ENCODE measurements at regions of chr9 and their contacts with region 1.

Region 1: GRCh38 chr9:99140685-99141314 is 35.9 kb downstream of the TGFBR1 start:
- DNase-seq: peak; percentile 78
- H3K4me3 ChIP-seq: no peak overlapping the region
- H3K27ac ChIP-seq: peak overlapping the region; percentile 9 to 75 (median 64)
- H3K4me1 ChIP-seq: peaks cover 0 to 56% (median 36%) of the 10 kb centered on the region in 4 donors
- H3K27me3 ChIP-seq: no peaks in the 10 kb centered on the region
- CTCF ChIP-seq: peak; percentile 87 to 97 (median 90)
- EP300 ChIP-seq: no peak
- POLR2A ChIP-seq: no peak

Region 2: GRCh38 chr9:98801969-98802371 is 338.8 kb before region 1 on chr9:
- intact Hi-C with region 1: loop called (anchors 5 kb)
- DNase-seq: no peak
- H3K4me3 ChIP-seq: no peak overlapping the region
- H3K27ac ChIP-seq: peak overlapping the region in 2 of 4 donors; percentile 17 to 34
- H3K4me1 ChIP-seq: peaks cover 0 to 38% (median 24%) of the 10 kb centered on the region in 4 donors
- H3K27me3 ChIP-seq: no peaks in the 10 kb centered on the region
- CTCF ChIP-seq: no peak
- EP300 ChIP-seq: no peak
- POLR2A ChIP-seq: no peak

Region 3: DNA sequence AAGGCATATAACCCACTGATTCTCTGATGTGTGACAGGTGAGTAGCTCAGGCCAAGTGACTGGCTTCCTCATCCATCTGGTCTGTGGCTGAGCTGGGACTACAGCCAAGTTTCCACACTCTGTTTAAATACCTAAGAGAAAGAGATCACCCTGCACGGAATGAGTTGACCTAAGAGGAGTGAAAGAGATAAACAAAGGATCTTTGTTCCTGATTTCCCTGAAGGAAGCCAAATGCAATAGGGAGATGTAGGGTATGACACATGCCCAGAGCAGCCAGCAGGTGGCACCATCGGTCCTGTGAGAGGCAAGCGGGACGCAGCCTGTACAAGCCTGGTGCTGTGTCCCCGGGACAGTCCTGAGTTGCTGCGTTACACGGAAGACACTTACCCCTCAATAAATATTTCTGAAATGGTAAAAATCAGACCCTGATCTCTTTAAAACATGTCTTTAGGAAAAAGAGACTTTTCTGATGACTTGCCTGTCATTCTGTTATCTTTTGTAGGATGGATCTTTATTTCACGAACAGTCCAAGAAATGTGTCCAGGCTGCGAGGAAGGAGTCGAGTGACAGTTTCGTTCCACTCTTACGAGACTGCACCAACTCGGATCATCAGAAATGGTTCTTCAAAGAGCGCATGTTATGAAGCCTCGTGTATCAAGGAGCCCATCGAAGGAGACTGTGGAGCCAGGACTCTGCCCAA is 292.2 kb before region 1 on chr9:
- intact Hi-C with region 1: loop called (anchors 2 kb)
- DNase-seq: peak; percentile 97
- H3K4me3 ChIP-seq: peak overlapping the region; percentile 13 to 27 (median 24)
- H3K27ac ChIP-seq: peak overlapping the region; percentile 72 to 84 (median 79)
- H3K4me1 ChIP-seq: peaks cover 0 to 47% (median 37%) of the 10 kb centered on the region in 4 donors
- H3K27me3 ChIP-seq: no peaks in the 10 kb centered on the region
- CTCF ChIP-seq: peak; percentile 87 to 94 (median 90)
- EP300 ChIP-seq: peak in 1 of 4 donors; percentile 1
- POLR2A ChIP-seq: no peak

Region 4: DNA sequence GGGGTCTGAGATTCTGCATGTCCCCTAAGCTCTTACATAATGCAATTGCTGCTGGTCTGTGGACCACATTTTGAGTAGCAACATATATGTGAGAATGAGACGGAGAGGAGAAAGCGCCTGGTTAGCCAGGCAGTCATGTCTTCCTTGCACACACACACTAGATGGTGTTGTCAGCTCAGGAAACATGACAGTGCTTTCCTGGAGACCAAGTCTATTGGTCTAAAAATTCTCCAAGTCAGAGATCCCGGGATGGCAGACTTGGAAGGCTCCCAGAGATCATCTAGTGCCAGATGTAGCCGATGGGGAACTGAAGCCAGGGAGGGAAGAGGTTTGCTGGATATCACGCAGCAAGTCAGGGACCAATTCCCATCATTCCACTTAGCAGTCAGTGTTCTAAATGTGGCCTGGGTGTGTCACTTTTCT is 279.9 kb before region 1 on chr9:
- intact Hi-C with region 1: loop called (anchors 2 kb)
- DNase-seq: peak; percentile 92
- H3K4me3 ChIP-seq: no peak overlapping the region
- H3K27ac ChIP-seq: peak overlapping the region; percentile 12 to 72 (median 66)
- H3K4me1 ChIP-seq: peaks cover 0 to 29% (median 12%) of the 10 kb centered on the region in 4 donors
- H3K27me3 ChIP-seq: no peaks in the 10 kb centered on the region
- CTCF ChIP-seq: peak; percentile 54 to 63 (median 60)
- EP300 ChIP-seq: peak in 2 of 4 donors; percentile 29 to 54
- POLR2A ChIP-seq: no peak

Region 5: DNA sequence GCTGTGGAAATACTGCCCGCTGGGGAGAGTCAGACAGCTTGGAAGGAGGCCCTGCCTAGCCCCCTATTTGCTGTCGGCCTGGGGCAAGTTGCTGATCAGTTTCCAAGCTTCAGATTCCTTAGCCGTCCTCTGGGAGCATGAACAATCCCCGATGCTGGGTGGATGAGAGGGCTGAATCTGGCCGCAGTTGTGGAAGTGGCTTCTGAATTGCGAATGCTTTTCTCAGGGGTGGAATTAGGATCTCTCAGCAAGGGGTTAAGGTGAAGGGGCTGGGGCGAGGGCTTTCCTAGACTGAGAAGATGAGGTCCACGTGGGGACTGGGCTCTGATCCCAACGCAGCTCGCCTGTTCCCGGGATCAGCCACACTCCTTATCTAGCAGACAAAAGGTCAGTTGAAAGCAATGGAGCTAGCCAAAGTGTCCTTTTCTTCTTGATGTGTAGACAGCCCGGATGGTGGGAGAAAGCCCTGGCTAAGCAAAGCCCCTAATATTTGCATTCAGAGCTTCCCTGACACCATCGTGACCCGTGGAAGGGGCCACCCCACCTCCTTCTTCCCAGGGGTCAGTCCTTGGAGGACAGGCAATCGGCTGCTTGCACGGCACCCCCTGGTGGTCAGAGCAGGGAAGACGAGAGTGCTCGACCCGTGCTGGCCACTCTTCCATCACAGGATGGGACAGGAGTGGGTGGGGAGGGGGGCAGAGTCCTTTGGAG is 142.2 kb before region 1 on chr9:
- intact Hi-C with region 1: loop called (anchors 2 kb)
- DNase-seq: peak; percentile 93
- H3K4me3 ChIP-seq: no peak overlapping the region
- H3K27ac ChIP-seq: peak overlapping the region; percentile 80 to 88 (median 83)
- H3K4me1 ChIP-seq: peaks cover 0 to 68% (median 53%) of the 10 kb centered on the region in 4 donors
- H3K27me3 ChIP-seq: no peaks in the 10 kb centered on the region
- CTCF ChIP-seq: peak; percentile 87 to 96 (median 94)
- EP300 ChIP-seq: no peak
- POLR2A ChIP-seq: no peak

Region 6: DNA sequence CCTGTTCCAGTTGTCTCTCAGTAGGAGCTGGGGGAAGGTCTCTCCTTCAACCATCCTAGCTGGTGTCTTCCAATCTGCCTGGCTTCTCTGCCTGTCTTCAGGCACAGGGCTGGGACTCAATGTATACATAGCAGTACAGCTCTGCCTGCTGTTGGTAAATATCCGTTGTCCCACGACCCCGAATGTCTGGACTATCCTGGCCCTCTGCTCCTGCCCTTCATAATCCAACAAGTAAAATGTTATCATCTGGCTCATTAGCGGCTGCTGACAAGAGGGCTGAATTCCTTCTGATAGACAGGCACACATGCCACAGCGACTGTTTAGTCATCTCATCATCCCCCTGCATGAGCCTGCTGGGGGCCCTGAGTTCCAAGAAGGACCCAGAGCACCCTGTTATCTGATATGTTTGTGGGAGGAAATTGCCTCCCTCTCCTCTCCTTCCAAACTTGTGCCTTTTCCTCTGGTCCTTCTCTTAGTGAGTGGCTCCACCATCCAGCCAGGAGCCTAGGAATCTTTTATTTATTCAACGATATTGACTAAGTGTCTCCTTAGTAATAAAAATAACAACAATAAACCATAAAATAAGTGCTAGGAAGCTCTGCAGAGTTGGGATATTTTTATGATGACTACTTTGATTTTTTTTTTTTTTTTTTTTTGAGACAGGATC is 65.4 kb before region 1 on chr9:
- intact Hi-C with region 1: no loop called
- DNase-seq: no peak
- H3K4me3 ChIP-seq: no peak overlapping the region
- H3K27ac ChIP-seq: no peak overlapping the region
- H3K4me1 ChIP-seq: peaks cover 0 to 8% (median 5%) of the 10 kb centered on the region in 4 donors
- H3K27me3 ChIP-seq: no peaks in the 10 kb centered on the region
- CTCF ChIP-seq: no peak
- EP300 ChIP-seq: no peak
- POLR2A ChIP-seq: no peak

Region 7: DNA sequence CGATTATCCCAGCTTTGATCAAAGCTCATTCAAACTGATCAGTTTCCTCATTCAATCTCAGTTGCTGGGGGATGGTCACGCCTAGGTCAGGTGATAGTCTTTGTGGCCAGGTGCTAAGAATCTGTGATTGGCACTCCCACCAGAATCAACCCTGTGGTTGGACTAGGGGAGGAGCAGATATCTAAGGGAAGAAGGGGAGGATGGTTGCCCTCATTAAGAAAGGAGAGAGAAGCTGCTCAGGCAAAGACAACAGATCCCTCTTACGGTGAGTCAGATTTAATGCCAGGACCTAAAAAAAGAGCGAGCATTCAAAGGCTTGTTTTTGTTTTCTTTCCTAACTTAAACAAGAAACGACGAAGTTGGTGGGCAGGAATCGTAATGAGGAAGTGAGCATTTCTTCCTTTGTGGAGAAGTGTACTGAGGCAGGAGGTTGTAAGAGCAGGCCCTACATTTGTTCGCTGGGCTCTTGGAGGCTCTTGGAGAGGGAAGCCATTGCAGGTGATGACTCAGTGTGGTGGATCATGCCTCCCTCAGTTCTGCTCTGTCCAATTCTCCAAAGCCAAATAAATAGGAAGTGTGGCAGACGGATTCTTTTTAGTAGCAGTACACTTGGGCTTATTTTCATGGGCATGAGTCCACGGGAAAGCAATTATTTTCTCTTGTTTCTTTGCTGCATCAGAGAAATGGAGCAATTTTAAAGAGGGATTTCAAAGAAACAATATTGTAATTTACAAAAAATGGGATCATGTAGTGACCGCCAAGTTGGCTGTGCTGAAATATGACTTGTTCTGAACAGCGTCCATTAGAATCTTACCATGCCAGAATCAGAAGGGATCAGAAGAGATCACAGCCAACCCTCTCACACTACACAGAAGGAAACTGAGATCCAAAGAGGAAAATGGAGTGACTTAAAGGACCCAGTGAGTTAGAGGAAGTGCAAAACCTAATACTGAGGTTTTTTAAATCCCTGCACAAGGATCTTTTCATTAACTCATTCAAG is 54.6 kb before region 1 on chr9:
- intact Hi-C with region 1: no loop called
- DNase-seq: no peak
- H3K4me3 ChIP-seq: no peak overlapping the region
- H3K27ac ChIP-seq: peak overlapping the region in 2 of 4 donors; percentile 19 to 44
- H3K4me1 ChIP-seq: peaks cover 0 to 11% (median 8%) of the 10 kb centered on the region in 4 donors
- H3K27me3 ChIP-seq: no peaks in the 10 kb centered on the region
- CTCF ChIP-seq: no peak
- EP300 ChIP-seq: no peak
- POLR2A ChIP-seq: no peak

Region 8: DNA sequence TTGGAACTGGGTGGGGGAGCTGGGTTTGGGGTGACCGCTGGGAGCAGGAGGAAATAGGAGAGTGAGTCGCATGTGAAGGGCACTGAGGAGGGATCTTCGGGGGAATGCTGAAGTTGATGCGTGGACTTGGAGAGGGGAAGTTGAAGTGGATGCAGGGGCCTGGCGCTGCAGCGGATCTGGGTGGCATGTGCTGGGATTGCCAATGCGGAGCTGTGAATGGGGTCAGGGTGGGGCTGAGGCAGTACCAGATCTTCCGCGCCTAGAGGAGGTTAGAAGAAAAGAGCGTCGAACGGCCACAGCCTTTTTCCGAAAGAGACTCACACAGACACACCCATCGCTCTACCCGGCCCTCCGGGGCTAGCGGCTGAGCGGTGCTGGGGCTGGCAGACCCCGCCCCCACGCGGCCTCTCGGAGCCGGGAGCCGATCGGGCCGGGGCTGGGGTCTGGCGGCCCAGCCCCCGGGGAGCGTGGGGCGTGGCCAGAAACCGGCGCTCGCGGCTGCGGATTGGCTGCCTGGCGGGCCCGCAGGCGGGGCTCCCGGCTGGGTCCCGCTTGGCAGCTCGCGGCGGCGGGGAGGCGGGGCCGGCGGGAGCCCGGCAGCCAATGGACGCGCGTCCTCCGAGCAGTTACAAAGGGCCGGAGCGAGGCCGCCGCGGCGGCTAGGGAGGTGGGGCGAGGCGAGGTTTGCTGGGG is 36.2 kb before region 1 on chr9 and contains the start of gene TGFBR1:
- intact Hi-C with region 1: loop called (anchors 5 kb)
- DNase-seq: peak; percentile 96
- H3K4me3 ChIP-seq: peak within 1 kb of the TSS; percentile 85 to 98 (median 90)
- H3K27ac ChIP-seq: peak within 1 kb of the TSS; percentile 92 to 95 (median 93)
- H3K4me1 ChIP-seq: peaks cover 0 to 59% (median 49%) of the 10 kb centered on the region in 4 donors
- H3K27me3 ChIP-seq: no peaks in the 10 kb centered on the region
- CTCF ChIP-seq: peak in 1 of 4 experiments; percentile 11
- EP300 ChIP-seq: peak in 1 of 4 donors; percentile 14
- POLR2A ChIP-seq: peak; percentile 57 to 68
- total RNA-seq, gene TGFBR1: 48.4 to 84.3 (median 62.5) TPM

Region 9: DNA sequence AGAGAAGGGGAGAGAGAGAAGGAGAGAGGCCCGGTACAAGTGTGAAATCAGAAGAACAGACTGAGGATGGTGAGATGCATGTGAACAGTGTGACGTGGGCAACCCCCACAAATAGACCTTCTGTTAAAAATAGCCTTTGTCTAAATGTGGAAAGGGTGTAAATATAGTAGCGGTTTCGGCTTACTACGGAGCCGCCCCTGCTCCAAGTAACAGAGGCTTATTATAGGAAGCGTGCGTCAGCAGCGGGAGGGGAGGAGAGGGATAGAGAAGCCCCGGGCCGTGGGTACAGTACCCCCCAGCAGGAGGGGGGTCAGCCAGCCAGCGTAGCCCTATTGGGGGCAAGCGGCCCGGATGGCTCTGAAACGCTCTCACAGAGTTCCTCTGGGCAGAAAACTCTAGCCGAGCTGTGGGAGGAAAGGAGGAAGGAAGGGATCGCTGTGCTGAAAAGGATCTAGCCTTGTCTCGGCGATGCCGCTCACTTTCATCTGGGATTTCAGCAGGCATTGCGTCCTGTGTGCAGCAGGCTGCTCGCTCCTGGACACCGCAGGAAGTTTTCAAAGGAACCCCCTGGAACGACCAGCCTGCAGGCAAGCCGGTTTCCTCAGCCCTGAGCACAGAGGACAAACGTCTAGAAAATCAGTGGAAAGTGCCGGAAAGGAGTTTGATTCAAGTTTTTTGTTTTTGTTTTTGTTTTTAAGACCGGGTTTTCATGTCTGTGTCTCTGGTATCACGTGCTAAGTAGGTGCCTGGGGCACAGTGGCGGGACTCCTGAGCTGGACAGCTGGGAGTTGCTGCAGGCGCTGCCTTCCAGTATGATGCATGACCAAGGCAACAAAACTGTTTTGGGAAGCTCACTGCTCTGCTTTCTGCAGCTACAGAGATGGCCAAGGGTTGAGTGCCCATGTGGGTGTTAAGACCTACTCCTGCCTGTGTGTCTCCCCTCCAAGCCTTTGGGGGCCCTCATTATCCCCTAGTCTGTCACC is 227.8 kb after region 1 on chr9:
- intact Hi-C with region 1: no loop called
- DNase-seq: peak; percentile 77
- H3K4me3 ChIP-seq: peak overlapping the region; percentile 21 to 53 (median 47)
- H3K27ac ChIP-seq: peak overlapping the region; percentile 70 to 76 (median 73)
- H3K4me1 ChIP-seq: peaks cover 0 to 18% (median 12%) of the 10 kb centered on the region in 4 donors
- H3K27me3 ChIP-seq: no peaks in the 10 kb centered on the region
- CTCF ChIP-seq: no peak
- EP300 ChIP-seq: peak in 3 of 4 donors; percentile 71 to 95 (median 83)
- POLR2A ChIP-seq: no peak

Region 10: GRCh38 chr9:99531313-99531712 is 390.5 kb after region 1 on chr9:
- intact Hi-C with region 1: no loop called
- DNase-seq: no peak
- H3K4me3 ChIP-seq: no peak overlapping the region
- H3K27ac ChIP-seq: no peak overlapping the region
- H3K4me1 ChIP-seq: no peaks in the 10 kb centered on the region
- H3K27me3 ChIP-seq: no peaks in the 10 kb centered on the region
- CTCF ChIP-seq: no peak
- EP300 ChIP-seq: no peak
- POLR2A ChIP-seq: no peak

Measured in sigmoid colon (tissue), 7 donors.